ENCODE measurements at regions of chr1 and their contacts with region 1.

Region 1: GRCh38 chr1:40241362-40241761 is 6.4 kb upstream of the TMCO2 start:
- DNase-seq: no peak
- H3K4me3 Mint-ChIP-seq: peak overlapping the region; percentile 20
- H3K27ac Mint-ChIP-seq: peak overlapping the region; percentile 89
- H3K4me1 Mint-ChIP-seq: peaks cover 51% of the 10 kb centered on the region
- H3K27me3 Mint-ChIP-seq: no peaks in the 10 kb centered on the region

Region 2: GRCh38 chr1:40049725-40050124 is 191.6 kb before region 1 on chr1:
- CTCF ChIA-PET with region 1: no interaction called
- intact Hi-C with region 1: loop called (anchors 5 kb)
- DNase-seq: peak; percentile 45
- H3K4me3 Mint-ChIP-seq: peak overlapping the region; percentile 52
- H3K27ac Mint-ChIP-seq: peak overlapping the region; percentile 90
- H3K4me1 Mint-ChIP-seq: peaks cover 82% of the 10 kb centered on the region
- H3K27me3 Mint-ChIP-seq: no peaks in the 10 kb centered on the region

Region 3: GRCh38 chr1:40224040-40224439 is 17.3 kb before region 1 on chr1:
- CTCF ChIA-PET with region 1: interaction called, 5 read pairs
- intact Hi-C with region 1: loop called (anchors 1 kb)
- DNase-seq: peak; percentile 42
- H3K4me3 Mint-ChIP-seq: no peak overlapping the region
- H3K27ac Mint-ChIP-seq: no peak overlapping the region
- H3K4me1 Mint-ChIP-seq: peaks cover 15% of the 10 kb centered on the region
- H3K27me3 Mint-ChIP-seq: no peaks in the 10 kb centered on the region

Region 4: DNA sequence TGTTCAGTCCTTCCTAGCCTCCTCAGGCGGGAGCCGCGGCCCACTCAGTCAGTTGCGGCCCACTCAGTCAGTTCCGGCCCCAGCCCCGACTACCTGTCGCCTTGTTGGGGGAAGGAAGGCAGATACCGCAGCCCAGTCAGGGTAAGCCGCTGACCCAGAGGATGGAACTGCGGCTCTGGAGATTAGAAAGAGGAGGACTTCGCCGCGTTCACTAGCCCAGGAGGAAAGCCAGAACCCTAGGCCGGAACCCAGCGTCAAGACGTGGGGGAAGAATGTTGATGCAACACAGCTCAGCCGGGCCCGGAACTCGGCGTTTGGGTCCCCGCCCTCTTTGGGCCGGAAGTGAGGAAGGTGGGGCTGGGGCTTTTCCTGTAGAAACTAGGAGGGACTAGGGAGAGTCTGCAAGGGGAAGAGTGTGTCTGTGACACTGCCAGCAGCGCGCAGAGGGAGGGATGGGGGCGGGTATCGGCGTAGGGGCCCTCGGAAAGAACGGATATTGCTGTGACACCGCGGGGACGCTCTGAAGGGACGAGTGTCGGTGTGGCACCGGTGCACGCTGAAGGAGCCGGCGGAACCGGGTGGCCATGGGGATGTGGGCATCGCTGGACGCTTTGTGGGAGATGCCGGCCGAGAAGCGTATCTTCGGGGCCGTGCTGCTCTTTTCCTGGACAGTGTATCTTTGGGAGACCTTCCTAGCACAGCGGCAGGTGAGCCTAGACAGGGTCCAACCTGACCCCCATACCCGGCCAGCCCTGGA is 16.5 kb after region 1 on chr1 and contains the start of gene ZMPSTE24:
- CTCF ChIA-PET with region 1: interaction called, 3 read pairs
- intact Hi-C with region 1: loop called (anchors 1 kb)
- DNase-seq: peak; percentile 98
- H3K4me3 Mint-ChIP-seq: peak within 1 kb of the TSS; percentile 99
- H3K27ac Mint-ChIP-seq: peak within 1 kb of the TSS; percentile 100
- H3K4me1 Mint-ChIP-seq: peaks cover 35% of the 10 kb centered on the region
- H3K27me3 Mint-ChIP-seq: no peaks in the 10 kb centered on the region
- total RNA-seq, gene ZMPSTE24: 13.2 to 14.7 TPM

Region 5: GRCh38 chr1:40267767-40268187 is 26.4 kb after region 1 on chr1:
- CTCF ChIA-PET with region 1: no interaction called
- intact Hi-C with region 1: loop called (anchors 1 kb)
- DNase-seq: no peak
- H3K4me3 Mint-ChIP-seq: no peak overlapping the region
- H3K27ac Mint-ChIP-seq: no peak overlapping the region
- H3K4me1 Mint-ChIP-seq: peaks cover 53% of the 10 kb centered on the region
- H3K27me3 Mint-ChIP-seq: no peaks in the 10 kb centered on the region